Activated CD4-positive, alpha-beta T cell treated with anti-CD3 and anti-CD28 coated beads for 36 hours (primary cell): ENCODE measurements at regions of chr7 and their contacts with region 1.

Region 1: DNA sequence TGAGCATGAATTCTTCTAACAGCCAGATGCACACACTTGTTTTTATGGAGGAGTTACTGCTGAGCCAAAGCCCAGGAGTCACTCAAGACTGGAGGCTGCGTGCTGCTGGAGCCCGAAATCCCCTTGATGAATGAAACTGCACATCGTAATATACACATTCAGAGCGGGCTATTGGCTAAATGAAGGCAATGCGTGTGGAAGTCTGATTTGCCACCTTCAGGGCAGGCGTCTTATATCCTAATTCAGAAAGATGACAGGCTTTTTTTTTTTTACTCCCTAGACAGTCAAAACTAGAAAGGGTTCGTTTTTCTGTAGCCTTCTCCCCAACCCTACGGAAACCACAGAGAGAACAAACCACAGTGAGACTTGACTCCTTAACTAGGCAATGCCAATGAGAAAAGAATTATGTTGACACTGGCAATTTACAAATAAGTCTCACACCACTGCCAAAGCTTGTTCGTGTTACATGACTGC is 227.2 kb upstream of the KLF14 start:
- DNase-seq: peak; percentile 88
- ATAC-seq: peak; percentile 86
- H3K4me3 Mint-ChIP-seq: no peak overlapping the region
- H3K27ac Mint-ChIP-seq: peak overlapping the region; percentile 100
- H3K4me1 Mint-ChIP-seq: peaks cover 40% of the 10 kb centered on the region
- H3K27me3 Mint-ChIP-seq: no peaks in the 10 kb centered on the region

Region 2: DNA sequence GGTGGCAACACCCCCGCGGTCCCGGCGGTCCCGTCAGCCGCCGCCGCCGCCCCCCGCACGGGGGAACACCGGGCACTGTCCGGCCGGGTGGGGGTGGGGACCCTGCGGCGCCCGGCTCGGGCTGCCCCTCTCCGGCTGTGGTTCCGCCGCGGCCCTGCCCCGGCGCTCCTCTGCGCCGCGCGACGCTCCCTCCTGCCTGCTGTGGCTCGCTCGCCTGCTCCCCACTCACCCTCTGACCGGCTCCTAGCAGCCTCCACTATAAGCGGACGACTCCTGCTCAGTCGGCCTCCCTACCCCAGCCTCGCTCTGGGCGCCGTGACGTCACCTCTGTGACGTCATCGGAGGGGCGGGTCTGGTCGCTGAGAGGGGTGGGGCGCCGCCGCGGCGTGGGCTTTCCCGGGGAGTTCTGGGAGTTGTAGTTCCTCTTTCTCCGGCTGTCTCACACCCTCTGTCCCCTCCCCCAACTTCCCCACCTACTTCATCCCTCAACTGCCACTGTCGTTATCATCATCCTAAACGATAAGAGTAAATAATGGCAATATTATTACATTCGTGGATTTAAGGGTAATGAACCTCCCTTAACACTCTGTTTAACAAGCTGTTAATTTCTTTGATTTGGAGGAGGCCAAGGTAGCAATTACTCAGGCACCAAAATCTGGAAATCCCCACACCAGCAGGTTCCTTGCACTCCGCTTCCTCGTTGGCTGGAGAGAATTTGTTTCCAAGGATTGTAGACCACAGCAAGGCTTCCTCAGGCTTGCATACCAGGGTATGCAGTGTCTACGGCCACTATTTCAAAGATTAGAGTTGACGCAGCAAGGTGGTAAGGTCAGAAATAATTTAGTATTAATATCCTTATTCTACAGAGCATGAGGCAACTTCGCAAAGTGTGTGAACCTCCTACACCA is 1008.3 kb before region 1 on chr7 and contains the start of gene UBE2H:
- CTCF ChIA-PET with region 1: no interaction called
- POLR2A ChIA-PET with region 1: no interaction called
- intact Hi-C with region 1: loop called in 1 of 2 experiments (anchors 5 kb)
- DNase-seq: peak; percentile 96
- ATAC-seq: peak; percentile 66
- H3K4me3 Mint-ChIP-seq: no peak within 1 kb of the TSS
- H3K27ac Mint-ChIP-seq: peak within 1 kb of the TSS; percentile 99
- H3K4me1 Mint-ChIP-seq: peaks cover 8% of the 10 kb centered on the region
- H3K27me3 Mint-ChIP-seq: no peaks in the 10 kb centered on the region
- total RNA-seq, gene UBE2H: 25.6 to 40.7 TPM

Region 3: DNA sequence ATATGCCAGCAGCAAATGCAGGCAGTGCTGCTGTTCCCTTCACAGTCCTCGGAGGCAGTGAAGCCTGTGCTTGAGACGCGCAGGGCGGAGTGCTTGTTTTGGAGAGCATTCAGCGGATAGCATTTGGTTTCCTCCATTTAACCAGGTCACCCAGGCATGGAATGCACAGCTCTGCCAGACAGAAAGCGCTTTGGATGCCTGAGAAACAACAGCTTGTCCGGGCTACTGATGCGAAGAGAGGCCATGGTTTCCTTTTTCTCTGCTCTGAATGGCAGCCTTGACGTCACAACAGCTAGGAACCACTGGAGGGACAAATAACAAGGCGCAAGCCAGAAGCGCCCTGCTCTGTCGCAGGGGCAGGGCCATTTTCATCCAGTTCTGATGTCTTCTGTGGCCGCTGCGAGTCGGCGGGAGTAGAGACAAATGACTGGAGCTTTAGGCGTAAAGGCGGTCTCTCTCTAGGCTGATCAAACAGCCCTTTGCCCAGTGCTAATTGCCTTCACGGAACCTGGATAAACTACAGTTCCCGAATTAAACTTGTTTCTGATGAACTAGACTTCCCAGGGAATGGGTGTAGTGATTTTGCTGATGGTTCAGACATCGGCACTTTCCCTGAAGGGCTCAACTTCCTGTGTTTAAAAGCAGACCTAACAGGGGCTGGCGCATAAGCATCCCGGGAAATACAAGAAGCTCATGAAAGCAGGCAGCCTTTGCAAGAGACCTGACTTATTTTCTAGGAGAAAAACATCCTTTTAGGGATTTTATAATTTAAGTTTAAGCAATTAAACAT is 39.6 kb before region 1 on chr7:
- CTCF ChIA-PET with region 1: no interaction called
- POLR2A ChIA-PET with region 1: interaction called, 11 read pairs
- intact Hi-C with region 1: no loop called
- DNase-seq: no peak
- ATAC-seq: no peak
- H3K4me3 Mint-ChIP-seq: no peak overlapping the region
- H3K27ac Mint-ChIP-seq: peak overlapping the region; percentile 47
- H3K4me1 Mint-ChIP-seq: peaks cover 96% of the 10 kb centered on the region
- H3K27me3 Mint-ChIP-seq: no peaks in the 10 kb centered on the region

Region 4: DNA sequence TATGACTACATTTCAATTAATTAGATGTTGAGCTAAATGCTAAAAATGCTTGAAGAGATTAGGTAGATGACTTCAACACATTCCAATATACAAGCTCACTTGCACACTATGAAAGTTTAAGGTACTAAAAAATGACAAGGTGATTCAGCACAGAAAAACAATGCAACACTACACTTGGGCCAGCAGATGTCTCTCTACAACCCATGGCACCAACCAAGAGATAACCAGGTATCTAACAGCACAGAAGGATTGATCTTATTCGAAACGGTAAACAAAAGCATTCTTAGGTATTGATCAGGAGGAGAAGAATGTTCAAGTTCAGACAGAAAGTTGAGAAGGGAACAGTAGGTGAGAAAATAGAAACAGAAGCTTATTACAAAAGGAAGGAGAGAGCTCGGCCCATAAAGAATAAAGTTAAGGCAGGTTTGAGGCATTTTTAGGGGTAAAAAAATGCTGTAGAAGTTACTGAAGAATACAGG is 21.0 kb after region 1 on chr7:
- CTCF ChIA-PET with region 1: interaction called, 56 read pairs
- POLR2A ChIA-PET with region 1: interaction called, 13 read pairs
- intact Hi-C with region 1: no loop called
- DNase-seq: peak; percentile 39
- ATAC-seq: peak; percentile 81
- H3K4me3 Mint-ChIP-seq: no peak overlapping the region
- H3K27ac Mint-ChIP-seq: no peak overlapping the region
- H3K4me1 Mint-ChIP-seq: peaks cover 54% of the 10 kb centered on the region
- H3K27me3 Mint-ChIP-seq: no peaks in the 10 kb centered on the region

Region 5: GRCh38 chr7:131027287-131027773 is 66.2 kb after region 1 on chr7:
- CTCF ChIA-PET with region 1: interaction called, 3 read pairs
- POLR2A ChIA-PET with region 1: interaction called, 6 read pairs
- intact Hi-C with region 1: loop called (anchors 1 kb)
- DNase-seq: peak; percentile 70
- ATAC-seq: peak; percentile 27
- H3K4me3 Mint-ChIP-seq: peak overlapping the region; percentile 25
- H3K27ac Mint-ChIP-seq: peak overlapping the region; percentile 85
- H3K4me1 Mint-ChIP-seq: peaks cover 85% of the 10 kb centered on the region
- H3K27me3 Mint-ChIP-seq: no peaks in the 10 kb centered on the region

Region 6: GRCh38 chr7:131131746-131132431 is 170.7 kb after region 1 on chr7:
- CTCF ChIA-PET with region 1: no interaction called
- POLR2A ChIA-PET with region 1: no interaction called
- intact Hi-C with region 1: no loop called
- DNase-seq: no peak
- ATAC-seq: no peak
- H3K4me3 Mint-ChIP-seq: no peak overlapping the region
- H3K27ac Mint-ChIP-seq: no peak overlapping the region
- H3K4me1 Mint-ChIP-seq: peaks cover 3% of the 10 kb centered on the region
- H3K27me3 Mint-ChIP-seq: no peaks in the 10 kb centered on the region

Region 7: GRCh38 chr7:131188367-131189339 is 227.5 kb after region 1 on chr7:
- CTCF ChIA-PET with region 1: no interaction called
- POLR2A ChIA-PET with region 1: no interaction called
- intact Hi-C with region 1: loop called (anchors 2 to 10 kb)
- DNase-seq: peak; percentile 65
- ATAC-seq: peak; percentile 84
- H3K4me3 Mint-ChIP-seq: peak overlapping the region; percentile 58
- H3K27ac Mint-ChIP-seq: peak overlapping the region; percentile 96
- H3K4me1 Mint-ChIP-seq: peaks cover 55% of the 10 kb centered on the region
- H3K27me3 Mint-ChIP-seq: no peaks in the 10 kb centered on the region